Heart right ventricle (tissue), 16 donors: ENCODE measurements at regions of chr6 and their contacts with region 1.

Region 1: GRCh38 chr6:139364302-139364981 is 10.0 kb downstream of the CITED2 start:
- DNase-seq: no peak
- ATAC-seq: peak in 6 of 8 donors; percentile 27 to 75 (median 49)
- H3K4me3 ChIP-seq: no peak overlapping the region
- H3K27ac ChIP-seq: peak overlapping the region in 1 of 10 donors; percentile 2
- H3K4me1 ChIP-seq: peaks cover 0 to 28% (median 14%) of the 10 kb centered on the region in 9 donors
- H3K27me3 ChIP-seq: no peaks in the 10 kb centered on the region
- CTCF ChIP-seq: peak; percentile 65 to 88 (median 78)

Region 2: DNA sequence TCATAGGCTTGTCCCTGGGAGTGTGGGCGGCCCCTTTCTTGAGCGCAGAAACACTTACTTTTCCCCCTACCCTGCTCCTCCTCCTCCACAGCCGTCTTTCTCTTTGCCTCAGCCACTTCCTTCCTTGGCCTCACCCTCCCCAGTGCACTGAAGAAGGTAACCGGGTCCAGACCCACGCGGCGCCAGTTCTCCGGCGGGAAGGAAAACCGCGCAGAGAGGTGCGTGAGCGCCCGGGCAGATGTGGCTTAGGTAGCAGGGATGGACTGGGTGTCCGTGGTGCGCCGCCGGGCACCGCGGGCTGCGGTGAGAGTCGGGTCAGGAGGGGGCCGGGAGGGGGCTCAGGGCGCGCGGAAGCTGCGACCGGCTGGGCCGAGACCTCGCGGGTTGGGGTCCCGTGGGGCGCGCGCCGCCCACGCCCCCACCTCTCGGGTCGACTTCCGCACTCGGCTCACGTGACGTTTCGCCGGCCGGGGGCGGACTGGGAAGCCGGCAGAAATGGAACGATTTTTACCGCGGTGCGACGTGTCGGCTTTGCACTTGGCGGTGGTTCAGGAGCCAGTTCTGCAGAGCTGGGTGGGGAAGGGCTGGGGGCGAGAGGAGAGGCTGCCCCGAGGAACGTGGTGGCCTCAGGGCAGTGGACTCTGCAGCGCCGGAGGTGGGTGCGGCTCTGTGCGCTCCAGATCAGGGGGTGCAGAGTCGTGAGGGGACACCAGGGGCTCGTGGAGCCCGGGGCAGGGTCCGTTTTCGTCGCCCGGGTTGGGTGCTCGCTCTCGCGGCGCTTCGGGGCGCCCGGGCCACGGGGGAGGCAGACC is 335.6 kb before region 1 on chr6 and contains the start of gene ABRACL:
- intact Hi-C with region 1: loop called in 1 of 10 experiments (anchors 10 kb)
- DNase-seq: peak; percentile 61 to 64
- ATAC-seq: peak; percentile 71 to 84 (median 78)
- H3K4me3 ChIP-seq: peak within 1 kb of the TSS; percentile 85 to 97 (median 95)
- H3K27ac ChIP-seq: peak within 1 kb of the TSS; percentile 38 to 96 (median 89)
- H3K4me1 ChIP-seq: peaks cover 0 to 49% (median 18%) of the 10 kb centered on the region in 9 donors
- H3K27me3 ChIP-seq: no peaks in the 10 kb centered on the region
- CTCF ChIP-seq: no peak
- total RNA-seq, gene ABRACL: 2.6 to 13.9 (median 5.2) TPM

Region 3: DNA sequence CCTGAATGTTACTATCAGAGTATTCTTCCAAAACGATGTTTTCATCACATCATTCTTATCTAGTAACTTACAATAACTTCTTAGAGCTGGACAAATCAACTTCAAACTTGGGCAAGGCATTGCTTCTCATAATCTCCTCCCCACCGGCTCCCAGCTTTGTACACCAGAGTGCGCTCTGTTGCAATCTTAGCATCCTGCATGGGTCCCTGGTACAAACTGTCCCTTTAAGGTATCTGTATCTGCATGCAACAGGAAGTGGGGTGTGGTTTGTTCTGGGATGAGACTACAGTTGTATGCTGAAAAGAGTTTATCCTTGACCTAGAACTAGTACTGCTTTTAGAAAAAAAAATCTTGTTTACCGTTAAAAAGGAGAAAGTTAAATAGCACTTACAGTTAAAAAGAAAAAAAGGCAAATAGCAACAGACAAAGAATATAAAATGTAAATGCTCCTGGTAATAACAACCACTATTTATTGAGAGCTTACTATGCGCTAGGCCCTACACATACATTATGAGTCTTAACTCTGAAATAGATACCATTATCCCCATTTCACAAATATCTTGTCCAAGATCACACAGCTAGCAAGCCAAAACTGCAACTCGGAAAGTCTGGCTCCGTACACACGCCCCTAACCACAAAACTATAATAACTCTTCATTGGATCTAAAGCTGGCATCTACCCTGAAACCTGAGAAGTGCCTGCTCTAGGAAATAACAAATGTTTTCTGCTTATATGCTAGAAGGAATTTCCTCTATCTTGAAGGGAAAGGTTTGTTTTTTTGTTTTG is 239.4 kb before region 1 on chr6:
- intact Hi-C with region 1: loop called (anchors 1 to 10 kb)
- DNase-seq: peak; percentile 42 to 66
- ATAC-seq: peak; percentile 92 to 99 (median 97)
- H3K4me3 ChIP-seq: no peak overlapping the region
- H3K27ac ChIP-seq: peak overlapping the region in 4 of 10 donors; percentile 2 to 64 (median 23)
- H3K4me1 ChIP-seq: peaks cover 0 to 28% (median 6%) of the 10 kb centered on the region in 9 donors
- H3K27me3 ChIP-seq: no peaks in the 10 kb centered on the region
- CTCF ChIP-seq: peak; percentile 38 to 76 (median 63)

Region 4: GRCh38 chr6:139219271-139219729 is 145.1 kb before region 1 on chr6:
- intact Hi-C with region 1: loop called in 8 of 10 experiments (anchors 1 to 5 kb)
- DNase-seq: peak; percentile 79 to 84
- ATAC-seq: peak; percentile 97 to 99 (median 98)
- H3K4me3 ChIP-seq: peak overlapping the region in 1 of 10 donors; percentile 2
- H3K27ac ChIP-seq: peak overlapping the region; percentile 17 to 81 (median 70)
- H3K4me1 ChIP-seq: peaks cover 0 to 18% (median 10%) of the 10 kb centered on the region in 9 donors
- H3K27me3 ChIP-seq: no peaks in the 10 kb centered on the region
- CTCF ChIP-seq: peak; percentile 65 to 95 (median 79)

Region 5: DNA sequence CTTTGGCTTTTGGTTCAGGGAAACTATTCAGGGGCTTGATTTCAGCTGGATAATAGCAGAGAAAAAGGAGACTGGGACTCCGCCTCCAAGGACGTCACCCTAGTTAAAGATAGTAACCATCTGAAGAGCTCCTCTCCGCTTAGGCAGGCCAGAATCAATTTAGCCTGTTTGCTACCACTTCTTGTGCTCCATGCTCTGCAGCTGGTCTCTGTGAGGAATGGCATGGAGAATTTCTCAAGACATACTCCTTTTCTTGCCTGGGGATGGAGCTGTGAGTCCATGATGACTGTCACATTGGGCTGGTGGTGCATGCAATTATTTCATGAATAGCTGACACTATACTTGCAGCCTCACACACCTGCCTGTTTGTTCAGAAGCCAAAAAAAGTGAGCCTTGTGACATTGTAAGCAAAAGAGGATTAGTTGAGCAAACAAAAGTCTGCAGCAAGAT is 134.0 kb before region 1 on chr6:
- intact Hi-C with region 1: loop called in 1 of 10 experiments (anchors 5 kb)
- DNase-seq: no peak
- ATAC-seq: peak in 6 of 8 donors; percentile 44 to 70 (median 60)
- H3K4me3 ChIP-seq: no peak overlapping the region
- H3K27ac ChIP-seq: peak overlapping the region in 1 of 10 donors; percentile 8
- H3K4me1 ChIP-seq: peaks cover 0 to 12% (median 3%) of the 10 kb centered on the region in 9 donors
- H3K27me3 ChIP-seq: no peaks in the 10 kb centered on the region
- CTCF ChIP-seq: peak in 3 of 9 donors; percentile 12 to 28 (median 20)

Region 6: GRCh38 chr6:139250296-139251044 is 114.0 kb before region 1 on chr6:
- intact Hi-C with region 1: loop called in 1 of 10 experiments (anchors 1 kb)
- DNase-seq: peak; percentile 61 to 63
- ATAC-seq: peak; percentile 69 to 94 (median 88)
- H3K4me3 ChIP-seq: no peak overlapping the region
- H3K27ac ChIP-seq: peak overlapping the region; percentile 47 to 89 (median 80)
- H3K4me1 ChIP-seq: peaks cover 10 to 37% (median 25%) of the 10 kb centered on the region in 9 donors
- H3K27me3 ChIP-seq: no peaks in the 10 kb centered on the region
- CTCF ChIP-seq: peak; percentile 48 to 84 (median 72)